ENCODE measurements at regions of chr11 and their contacts with region 1.

Region 1: GRCh38 chr11:117098269-117099232 is at the start of gene SIK3:
- DNase-seq: peak; percentile 95 to 98 (median 98)
- ATAC-seq: peak; percentile 82
- H3K4me3 ChIP-seq: peak within 1 kb of the TSS; percentile 91
- H3K27ac ChIP-seq: peak within 1 kb of the TSS; percentile 91
- H3K4me1 ChIP-seq: peaks cover 22 to 34% of the 10 kb centered on the region in 2 experiments
- H3K27me3 ChIP-seq: no peaks in the 10 kb centered on the region
- CTCF ChIP-seq: peak; percentile 51 to 68 (median 65)
- EP300 ChIP-seq: no peak
- POLR2A ChIP-seq: peak; percentile 63
- RAD21 ChIP-seq: peak; percentile 69 to 73
- polyA plus RNA-seq, gene SIK3: 1.6 to 1.8 TPM

Region 2: GRCh38 chr11:116787786-116788486 is 310.6 kb before region 1 on chr11 and contains the start of gene ZPR1:
- CTCF ChIA-PET with region 1: no interaction called
- POLR2A ChIA-PET with region 1: interaction called, 3 read pairs
- in situ Hi-C with region 1: loop called (anchors 5 kb)
- intact Hi-C with region 1: no loop called
- DNase-seq: peak; percentile 83 to 93 (median 90)
- ATAC-seq: peak; percentile 87
- H3K4me3 ChIP-seq: peak within 1 kb of the TSS; percentile 98
- H3K27ac ChIP-seq: peak within 1 kb of the TSS; percentile 60
- H3K4me1 ChIP-seq: peaks cover 22 to 33% of the 10 kb centered on the region in 2 experiments; a peak in 4 of 5 replicates
- H3K27me3 ChIP-seq: no peaks in the 10 kb centered on the region
- CTCF ChIP-seq: no peak; a peak in 1 of 6 replicates
- EP300 ChIP-seq: no peak
- POLR2A ChIP-seq: peak; percentile 83
- RAD21 ChIP-seq: no peak
- polyA plus RNA-seq, gene ZPR1: 13.0 to 17.2 TPM

Region 3: DNA sequence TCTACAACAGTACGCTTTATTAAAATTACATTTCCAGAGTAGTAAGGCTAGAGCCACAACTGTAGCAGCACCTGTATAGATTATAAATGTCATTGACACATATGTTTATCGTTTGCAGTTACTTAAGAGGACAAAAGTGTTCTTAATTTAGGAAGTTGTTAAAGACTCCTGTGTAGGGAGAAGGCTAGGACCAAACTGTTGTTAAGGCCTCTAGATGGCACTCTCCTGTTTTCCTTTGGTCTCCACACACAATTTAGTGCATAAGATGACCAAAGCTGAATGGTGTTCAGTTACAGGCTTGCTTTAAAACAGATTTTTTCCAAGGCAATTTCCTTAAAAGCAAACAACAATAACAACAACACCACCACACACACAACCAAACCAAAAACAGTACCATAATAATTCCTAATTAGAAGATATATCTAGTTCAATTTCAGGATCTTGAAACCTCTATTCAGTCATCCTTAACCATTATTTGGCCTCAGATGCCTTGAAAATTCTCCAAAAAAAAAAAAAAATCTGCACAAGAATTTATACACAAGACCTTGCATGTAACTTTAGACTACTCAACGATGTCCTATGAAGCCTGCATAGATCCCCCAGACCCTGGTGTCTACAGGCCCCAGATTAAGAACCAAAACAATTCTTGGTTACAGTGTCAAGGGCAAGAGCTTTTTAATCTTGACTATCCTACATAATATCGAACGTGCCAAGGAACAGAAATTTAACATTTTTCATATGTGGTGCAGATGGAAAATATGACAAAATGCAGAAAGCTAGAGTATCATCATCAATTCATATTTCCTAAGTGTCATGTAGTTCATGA is 218.5 kb before region 1 on chr11:
- CTCF ChIA-PET with region 1: interaction called, 8 read pairs
- POLR2A ChIA-PET with region 1: no interaction called
- in situ Hi-C with region 1: loop called (anchors 5 kb)
- intact Hi-C with region 1: loop called (anchors 2 kb)
- DNase-seq: peak in 3 of 4 experiments; percentile 34 to 66 (median 48)
- ATAC-seq: peak; percentile 97
- H3K4me3 ChIP-seq: no peak overlapping the region
- H3K27ac ChIP-seq: no peak overlapping the region
- H3K4me1 ChIP-seq: no peaks in the 10 kb centered on the region
- H3K27me3 ChIP-seq: no peaks in the 10 kb centered on the region
- CTCF ChIP-seq: peak; percentile 64 to 78 (median 67); a peak in 5 of 6 replicates
- EP300 ChIP-seq: no peak
- POLR2A ChIP-seq: no peak
- RAD21 ChIP-seq: peak; percentile 78 to 83

Region 4: DNA sequence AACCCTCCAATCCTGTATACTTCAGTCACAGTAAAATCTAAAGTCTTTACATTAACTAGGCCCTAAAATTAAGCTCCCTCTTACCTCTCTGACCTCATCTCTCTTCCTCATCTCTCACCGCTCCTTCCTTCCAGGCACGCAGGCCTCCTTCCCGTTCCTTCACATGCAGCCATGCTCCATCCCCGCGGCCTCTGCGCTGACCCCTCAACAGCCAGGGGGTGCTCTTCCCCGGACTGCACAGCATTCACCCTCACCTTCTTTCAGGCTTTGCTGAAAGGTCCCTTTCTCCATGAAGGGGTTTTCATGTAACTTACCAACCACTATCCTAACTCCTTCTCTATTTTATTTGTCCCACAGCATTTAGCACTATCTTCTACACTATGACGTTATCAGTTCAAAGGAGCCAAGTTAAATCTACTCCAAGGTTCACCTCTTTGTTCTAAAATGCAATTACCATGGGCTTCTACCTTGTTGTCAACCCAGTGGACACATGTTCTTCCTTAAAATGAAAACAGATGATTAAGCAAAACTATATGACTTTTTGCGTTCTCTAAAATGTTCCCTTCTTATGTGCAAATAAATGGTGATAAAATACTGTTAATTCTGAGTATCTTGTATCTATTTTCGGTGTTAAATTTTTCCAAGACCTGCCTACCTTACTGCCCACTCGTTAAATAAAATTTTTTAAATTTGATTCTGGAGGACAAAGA is 203.3 kb before region 1 on chr11:
- CTCF ChIA-PET with region 1: interaction called, 4 read pairs
- POLR2A ChIA-PET with region 1: no interaction called
- in situ Hi-C with region 1: no loop called
- intact Hi-C with region 1: loop called (anchors 5 kb)
- DNase-seq: peak; percentile 23 to 44 (median 40)
- ATAC-seq: peak; percentile 97
- H3K4me3 ChIP-seq: no peak overlapping the region
- H3K27ac ChIP-seq: no peak overlapping the region
- H3K4me1 ChIP-seq: no peaks in the 10 kb centered on the region
- H3K27me3 ChIP-seq: no peaks in the 10 kb centered on the region
- CTCF ChIP-seq: peak; percentile 52 to 72 (median 61); a peak in 5 of 6 replicates
- EP300 ChIP-seq: no peak
- POLR2A ChIP-seq: no peak
- RAD21 ChIP-seq: peak; percentile 52 to 70

Region 5: DNA sequence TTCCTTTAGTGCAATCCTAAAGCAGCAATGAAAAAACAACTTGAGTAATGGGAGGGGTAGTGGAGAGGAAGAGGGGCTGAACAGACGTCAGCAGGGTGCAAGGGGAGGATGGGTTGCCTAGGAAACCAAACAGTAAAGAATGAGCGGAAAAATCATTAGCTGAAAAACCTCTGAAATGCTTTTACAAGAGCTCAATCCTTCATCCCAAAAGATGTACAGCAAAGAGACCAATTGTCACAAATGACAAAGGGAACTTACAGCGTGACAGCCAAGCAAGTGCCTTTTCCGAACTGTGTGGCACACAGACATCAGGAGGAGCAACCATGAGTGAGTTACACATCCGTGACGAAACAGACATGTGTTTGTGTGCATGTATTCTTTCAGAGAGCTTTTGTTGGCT is 105.0 kb before region 1 on chr11:
- CTCF ChIA-PET with region 1: no interaction called
- POLR2A ChIA-PET with region 1: interaction called, 3 read pairs
- in situ Hi-C with region 1: no loop called
- intact Hi-C with region 1: loop called (anchors 5 kb)
- DNase-seq: no peak
- ATAC-seq: no peak
- H3K4me3 ChIP-seq: no peak overlapping the region
- H3K27ac ChIP-seq: no peak overlapping the region
- H3K4me1 ChIP-seq: peaks cover 0 to 10% of the 10 kb centered on the region in 2 experiments; a peak in 4 of 5 replicates
- H3K27me3 ChIP-seq: no peaks in the 10 kb centered on the region
- CTCF ChIP-seq: no peak
- EP300 ChIP-seq: no peak
- POLR2A ChIP-seq: no peak
- RAD21 ChIP-seq: no peak

Region 6: DNA sequence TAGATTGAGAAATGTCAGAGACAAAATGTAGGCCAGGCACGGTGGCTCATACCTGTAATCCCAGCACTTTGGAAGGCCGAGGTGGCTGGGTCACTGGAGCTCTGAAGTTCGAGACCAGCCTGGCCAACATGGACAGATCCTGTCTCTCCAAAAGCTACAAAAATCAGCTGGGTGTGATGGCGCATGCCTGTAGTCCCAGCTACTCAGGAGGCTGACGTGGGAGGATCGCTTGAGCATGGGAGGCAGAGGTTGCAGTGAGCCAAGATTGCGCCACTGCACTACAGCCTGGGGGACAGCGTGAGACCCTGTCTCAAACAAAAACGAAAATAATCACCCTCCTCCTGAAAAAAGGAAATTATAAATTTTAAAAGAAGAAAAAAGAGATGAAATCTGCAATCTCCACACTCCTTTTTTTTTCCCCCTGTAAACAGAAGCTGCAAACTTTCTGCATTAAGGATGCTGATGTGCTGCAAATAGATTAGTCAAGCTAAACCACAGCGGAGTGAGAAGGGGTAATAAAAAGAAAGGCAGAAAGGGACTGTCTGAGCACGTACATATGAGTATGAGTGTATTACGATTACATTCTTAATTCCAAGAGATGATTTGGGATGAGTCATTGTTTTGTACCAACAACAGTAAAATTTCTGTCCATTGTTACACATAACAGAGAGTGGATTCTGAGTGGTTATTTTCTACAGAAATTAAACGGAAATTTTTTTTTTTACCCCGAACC is 87.6 kb before region 1 on chr11:
- CTCF ChIA-PET with region 1: no interaction called
- POLR2A ChIA-PET with region 1: interaction called, 3 read pairs
- in situ Hi-C with region 1: no loop called
- intact Hi-C with region 1: loop called (anchors 5 kb)
- DNase-seq: no peak
- ATAC-seq: peak; percentile 41
- H3K4me3 ChIP-seq: no peak overlapping the region
- H3K27ac ChIP-seq: no peak overlapping the region
- H3K4me1 ChIP-seq: peaks cover 0 to 3% of the 10 kb centered on the region in 2 experiments; a peak in 1 of 5 replicates
- H3K27me3 ChIP-seq: no peaks in the 10 kb centered on the region
- CTCF ChIP-seq: no peak
- EP300 ChIP-seq: no peak
- POLR2A ChIP-seq: no peak
- RAD21 ChIP-seq: no peak

Region 7: DNA sequence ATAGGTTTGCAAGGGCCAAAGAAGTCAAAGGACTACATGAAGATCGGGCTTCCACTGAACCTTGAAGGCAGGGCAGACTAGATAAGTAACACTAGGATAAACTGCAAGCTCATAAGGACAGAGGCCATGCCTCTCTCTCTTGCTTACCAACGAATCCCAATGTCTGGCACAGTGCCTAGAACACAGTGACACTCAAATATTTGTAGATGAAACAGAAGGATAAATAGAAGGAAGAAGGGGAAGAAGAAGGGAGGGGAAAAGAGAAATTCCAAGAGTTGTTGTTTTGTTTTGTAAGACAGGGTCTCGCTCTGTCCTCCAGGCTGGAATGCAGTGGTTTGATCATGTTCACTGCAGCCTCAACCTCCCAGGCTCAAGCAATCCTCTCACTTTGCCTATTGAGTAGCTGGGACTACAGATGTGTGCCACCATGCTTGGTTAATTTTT is 27.2 kb before region 1 on chr11:
- CTCF ChIA-PET with region 1: no interaction called
- POLR2A ChIA-PET with region 1: no interaction called
- in situ Hi-C with region 1: no loop called
- intact Hi-C with region 1: loop called (anchors 2 kb)
- DNase-seq: peak in 2 of 4 experiments; percentile 39 to 72
- ATAC-seq: peak; percentile 81
- H3K4me3 ChIP-seq: no peak overlapping the region
- H3K27ac ChIP-seq: no peak overlapping the region
- H3K4me1 ChIP-seq: peaks cover 20 to 24% of the 10 kb centered on the region in 2 experiments; a peak in 4 of 5 replicates
- H3K27me3 ChIP-seq: no peaks in the 10 kb centered on the region
- CTCF ChIP-seq: no peak
- EP300 ChIP-seq: no peak
- POLR2A ChIP-seq: no peak
- RAD21 ChIP-seq: no peak

Region 8: GRCh38 chr11:117178210-117179034 is 79.9 kb after region 1 on chr11 and contains the start of gene SIDT2:
- CTCF ChIA-PET with region 1: no interaction called
- POLR2A ChIA-PET with region 1: no interaction called
- in situ Hi-C with region 1: no loop called
- intact Hi-C with region 1: no loop called
- DNase-seq: peak; percentile 86 to 95 (median 88)
- ATAC-seq: peak; percentile 94
- H3K4me3 ChIP-seq: peak within 1 kb of the TSS; percentile 49
- H3K27ac ChIP-seq: peak within 1 kb of the TSS; percentile 70
- H3K4me1 ChIP-seq: peaks cover 30 to 46% of the 10 kb centered on the region in 2 experiments
- H3K27me3 ChIP-seq: no peaks in the 10 kb centered on the region
- CTCF ChIP-seq: peak in 1 of 3 experiments; percentile 7; a peak in 1 of 6 replicates
- EP300 ChIP-seq: no peak
- POLR2A ChIP-seq: peak; percentile 62
- RAD21 ChIP-seq: no peak
- polyA plus RNA-seq, gene SIDT2: 2.4 to 3.6 TPM